SK-N-SH (cell line): ENCODE measurements at regions of chr6 and their contacts with region 1.

Region 1: DNA sequence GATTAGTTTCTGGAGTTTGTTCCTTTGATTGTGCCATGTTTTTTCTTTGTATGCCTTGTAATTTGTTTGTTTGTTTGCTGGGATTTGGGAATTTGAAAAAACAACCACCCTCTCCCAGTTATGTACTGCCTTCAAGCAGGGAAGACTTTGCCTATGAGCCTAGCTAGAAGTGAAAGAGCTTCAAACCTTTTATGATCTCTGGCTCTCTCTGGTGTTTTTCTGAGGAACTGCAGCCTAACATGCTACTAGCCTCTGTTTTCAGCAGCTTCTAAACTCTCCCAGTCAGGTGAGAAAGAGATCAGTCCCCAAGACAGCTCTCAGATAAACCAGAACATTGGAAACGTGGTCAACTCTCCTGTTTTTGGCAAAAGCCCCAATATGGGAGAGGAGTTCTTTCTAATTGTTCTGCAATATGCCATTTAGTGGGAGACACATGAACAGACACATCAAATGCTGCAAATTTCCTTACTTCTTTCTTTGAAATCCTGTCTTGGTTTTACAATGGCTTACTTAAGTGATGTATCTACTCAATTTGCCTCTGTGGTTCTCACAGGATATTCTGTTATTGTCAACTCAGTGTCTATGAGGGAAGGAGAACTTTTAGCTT is 58.9 kb upstream of the SERINC1 start:
- DNase-seq: peak; percentile 44
- H3K4me3 ChIP-seq: no peak overlapping the region
- H3K27ac ChIP-seq: no peak overlapping the region
- H3K4me1 ChIP-seq: no peaks in the 10 kb centered on the region
- H3K27me3 ChIP-seq: no peaks in the 10 kb centered on the region
- CTCF ChIP-seq: peak; percentile 83
- EP300 ChIP-seq: no peak
- RAD21 ChIP-seq: peak; percentile 90

Region 2: DNA sequence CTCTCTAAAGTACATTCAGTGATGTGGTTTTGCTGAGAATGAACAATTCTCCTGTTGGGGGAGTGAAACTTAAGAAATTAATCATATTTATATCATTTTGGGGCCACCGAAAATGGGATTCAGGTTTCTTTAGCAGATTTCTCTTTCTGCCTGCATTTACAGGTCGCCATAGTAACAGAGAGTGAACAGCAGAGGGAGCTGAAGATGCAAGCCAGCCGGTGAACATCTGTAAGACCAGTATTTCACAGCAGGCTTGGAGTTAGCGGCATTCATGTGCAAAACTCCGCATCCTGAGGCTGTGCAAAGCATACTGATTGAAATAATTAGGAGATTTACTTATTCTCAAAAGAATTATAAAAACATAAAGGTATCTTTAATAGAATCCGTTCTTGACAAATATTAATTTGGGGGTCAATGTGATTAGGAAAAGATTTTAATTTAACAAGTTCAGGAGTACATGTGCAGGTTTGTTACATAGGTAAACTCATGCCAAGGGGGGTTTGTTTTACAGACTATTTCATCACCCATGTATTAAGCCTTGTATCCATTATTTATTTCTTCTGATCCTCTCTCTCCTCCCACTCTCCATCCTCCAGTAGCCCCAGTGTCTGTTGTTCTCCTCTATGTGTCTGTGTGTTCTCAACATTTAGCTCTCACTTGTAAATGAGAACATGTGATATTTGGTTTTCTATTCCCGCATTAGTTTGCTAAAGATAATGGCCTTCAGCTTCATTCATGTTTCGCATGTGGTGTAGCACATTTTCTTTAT is 148.9 kb before region 1 on chr6:
- CTCF ChIA-PET with region 1: interaction called, 59 read pairs
- POLR2A ChIA-PET with region 1: no interaction called
- DNase-seq: peak; percentile 41
- H3K4me3 ChIP-seq: no peak overlapping the region
- H3K27ac ChIP-seq: no peak overlapping the region
- H3K4me1 ChIP-seq: no peaks in the 10 kb centered on the region
- H3K27me3 ChIP-seq: no peaks in the 10 kb centered on the region
- CTCF ChIP-seq: peak; percentile 77
- EP300 ChIP-seq: no peak
- RAD21 ChIP-seq: peak; percentile 79

Region 3: GRCh38 chr6:122471107-122472021 is 59.2 kb before region 1 on chr6 and contains the start of gene SERINC1:
- CTCF ChIA-PET with region 1: interaction called, 27 read pairs
- POLR2A ChIA-PET with region 1: no interaction called
- DNase-seq: peak; percentile 87
- H3K4me3 ChIP-seq: peak within 1 kb of the TSS; percentile 90 to 98
- H3K27ac ChIP-seq: peak within 1 kb of the TSS; percentile 85 to 91
- H3K4me1 ChIP-seq: peaks cover 0 to 5% of the 10 kb centered on the region in 2 experiments; a peak in 2 of 4 replicates
- H3K27me3 ChIP-seq: no peaks in the 10 kb centered on the region
- CTCF ChIP-seq: no peak
- EP300 ChIP-seq: no peak
- RAD21 ChIP-seq: no peak
- polyA plus RNA-seq, gene SERINC1: 55.2 and 93.1 TPM in 2 replicates

Region 4: DNA sequence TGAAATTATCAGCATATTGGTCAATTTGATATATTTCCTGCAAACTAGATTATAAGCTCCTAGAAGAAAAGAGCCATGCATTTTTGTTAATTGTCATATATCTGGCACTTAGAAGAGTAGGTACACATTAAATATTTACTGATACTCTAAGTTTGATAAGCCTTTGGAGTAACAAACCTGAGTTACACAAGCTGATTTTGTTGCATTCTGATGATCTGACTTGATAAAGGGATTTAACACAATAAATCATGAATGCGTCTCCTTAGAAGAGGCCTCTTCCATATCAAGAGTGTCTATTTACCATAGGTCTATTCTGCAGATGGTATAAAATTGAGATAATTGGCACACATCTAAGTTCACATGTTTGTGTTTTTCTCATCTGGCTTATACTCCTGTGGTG is 10.4 kb before region 1 on chr6:
- CTCF ChIA-PET with region 1: interaction called, 47 read pairs
- POLR2A ChIA-PET with region 1: no interaction called
- DNase-seq: no peak
- H3K4me3 ChIP-seq: no peak overlapping the region
- H3K27ac ChIP-seq: no peak overlapping the region
- H3K4me1 ChIP-seq: no peaks in the 10 kb centered on the region
- H3K27me3 ChIP-seq: no peaks in the 10 kb centered on the region
- CTCF ChIP-seq: no peak
- EP300 ChIP-seq: no peak
- RAD21 ChIP-seq: no peak